Activated B cell treated with CpG ODN at 0.5 μM for 24 hours (primary cell): ENCODE measurements at regions of chr17 and their contacts with region 1.

Region 1: GRCh38 chr17:3636154-3636907 is at the starts of genes CTNS and SHPK:
- DNase-seq: peak; percentile 93
- ATAC-seq: peak; percentile 98
- H3K4me3 Mint-ChIP-seq: peak within 1 kb of the TSS; percentile 98
- H3K27ac Mint-ChIP-seq: peak within 1 kb of the TSS; percentile 100
- H3K4me1 Mint-ChIP-seq: peaks cover 26% of the 10 kb centered on the region
- H3K27me3 Mint-ChIP-seq: no peaks in the 10 kb centered on the region
- CTCF ChIP-seq: no peak
- total RNA-seq, gene CTNS: 12.8 and 13.5 TPM in 2 replicates
- total RNA-seq, gene SHPK: 8.1 and 9.5 TPM in 2 replicates

Region 2: GRCh38 chr17:2929881-2930533 is 706.3 kb before region 1 on chr17:
- CTCF ChIA-PET with region 1: no interaction called
- POLR2A ChIA-PET with region 1: interaction called, 15 read pairs
- intact Hi-C with region 1: no loop called
- DNase-seq: peak; percentile 36
- ATAC-seq: peak; percentile 54
- H3K4me3 Mint-ChIP-seq: no peak overlapping the region
- H3K27ac Mint-ChIP-seq: no peak overlapping the region
- H3K4me1 Mint-ChIP-seq: peaks cover 25% of the 10 kb centered on the region
- H3K27me3 Mint-ChIP-seq: no peaks in the 10 kb centered on the region
- CTCF ChIP-seq: no peak

Region 3: GRCh38 chr17:3535253-3535995 is 100.9 kb before region 1 on chr17:
- CTCF ChIA-PET with region 1: no interaction called
- POLR2A ChIA-PET with region 1: interaction called, 3 read pairs
- intact Hi-C with region 1: loop called (anchors 5 kb)
- DNase-seq: peak; percentile 53
- ATAC-seq: peak; percentile 97
- H3K4me3 Mint-ChIP-seq: peak overlapping the region; percentile 67
- H3K27ac Mint-ChIP-seq: no peak overlapping the region
- H3K4me1 Mint-ChIP-seq: peaks cover 13% of the 10 kb centered on the region
- H3K27me3 Mint-ChIP-seq: no peaks in the 10 kb centered on the region
- CTCF ChIP-seq: no peak

Region 4: DNA sequence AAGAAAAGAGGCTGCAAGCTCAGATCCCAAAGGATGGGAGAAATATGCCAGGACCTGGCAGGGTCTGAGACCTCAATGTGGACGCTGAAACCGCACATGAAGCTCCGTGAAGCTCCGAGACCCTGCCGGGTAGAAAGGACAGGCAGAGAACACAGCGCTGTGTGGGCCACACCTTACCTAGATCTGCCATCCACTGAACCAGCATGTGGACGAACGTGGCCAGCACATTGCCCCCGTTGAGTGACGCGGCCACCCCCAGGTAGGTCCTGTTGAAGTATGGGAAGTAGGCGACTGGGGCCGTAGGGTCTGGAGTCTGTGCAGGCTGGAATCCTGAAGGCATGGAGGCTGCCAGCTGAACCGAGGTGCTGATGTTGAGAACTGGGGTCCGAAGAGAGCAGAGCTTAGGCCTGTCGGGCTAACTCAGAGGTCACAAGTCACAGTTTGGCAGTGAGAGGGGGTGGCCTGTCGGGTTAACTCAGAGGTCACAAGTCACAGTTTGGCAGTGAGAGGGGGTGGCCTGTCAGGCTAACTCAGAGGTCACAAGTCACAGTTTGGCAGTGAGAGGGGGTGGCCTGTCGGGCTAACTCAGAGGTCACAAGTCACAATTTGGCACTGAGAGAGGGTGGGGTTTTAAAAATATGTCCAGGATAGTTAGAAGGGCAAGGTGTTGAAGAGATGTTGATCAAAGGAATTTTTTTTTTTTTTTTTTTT is 21.0 kb before region 1 on chr17:
- CTCF ChIA-PET with region 1: no interaction called
- POLR2A ChIA-PET with region 1: no interaction called
- intact Hi-C with region 1: no loop called
- DNase-seq: no peak
- ATAC-seq: no peak
- H3K4me3 Mint-ChIP-seq: no peak overlapping the region
- H3K27ac Mint-ChIP-seq: no peak overlapping the region
- H3K4me1 Mint-ChIP-seq: no peaks in the 10 kb centered on the region
- H3K27me3 Mint-ChIP-seq: no peaks in the 10 kb centered on the region
- CTCF ChIP-seq: no peak

Region 5: GRCh38 chr17:3647769-3648555 is 11.6 kb after region 1 on chr17:
- CTCF ChIA-PET with region 1: interaction called, 4 read pairs
- POLR2A ChIA-PET with region 1: interaction called, 4 read pairs
- intact Hi-C with region 1: loop called (anchors 1 kb)
- DNase-seq: no peak
- ATAC-seq: peak; percentile 29
- H3K4me3 Mint-ChIP-seq: no peak overlapping the region
- H3K27ac Mint-ChIP-seq: no peak overlapping the region
- H3K4me1 Mint-ChIP-seq: peaks cover 30% of the 10 kb centered on the region
- H3K27me3 Mint-ChIP-seq: no peaks in the 10 kb centered on the region
- CTCF ChIP-seq: no peak

Region 6: GRCh38 chr17:3695723-3696411 is 59.5 kb after region 1 on chr17 and contains the start of gene P2RX5:
- CTCF ChIA-PET with region 1: no interaction called
- POLR2A ChIA-PET with region 1: interaction called, 8 read pairs
- intact Hi-C with region 1: loop called (anchors 5 kb)
- DNase-seq: peak; percentile 66
- ATAC-seq: peak; percentile 58
- H3K4me3 Mint-ChIP-seq: peak within 1 kb of the TSS; percentile 99
- H3K27ac Mint-ChIP-seq: peak within 1 kb of the TSS; percentile 97
- H3K4me1 Mint-ChIP-seq: peaks cover 77% of the 10 kb centered on the region
- H3K27me3 Mint-ChIP-seq: no peaks in the 10 kb centered on the region
- CTCF ChIP-seq: no peak
- total RNA-seq, gene P2RX5: 295 and 349 TPM in 2 replicates

Region 7: GRCh38 chr17:3845621-3846441 is 209.5 kb after region 1 on chr17 and contains the start of gene NCBP3:
- CTCF ChIA-PET with region 1: interaction called, 3 read pairs
- POLR2A ChIA-PET with region 1: interaction called, 12 read pairs
- intact Hi-C with region 1: loop called (anchors 1 kb)
- DNase-seq: peak; percentile 92
- ATAC-seq: peak; percentile 96
- H3K4me3 Mint-ChIP-seq: peak within 1 kb of the TSS; percentile 92
- H3K27ac Mint-ChIP-seq: peak within 1 kb of the TSS; percentile 83
- H3K4me1 Mint-ChIP-seq: peaks cover 21% of the 10 kb centered on the region
- H3K27me3 Mint-ChIP-seq: peaks cover 2% of the 10 kb centered on the region
- CTCF ChIP-seq: no peak
- total RNA-seq, gene NCBP3: 49.5 TPM in 2 replicates